Mammary epithelial cell (primary cell): ENCODE measurements at regions of chr2 and their contacts with region 1.

Region 1: GRCh38 chr2:88831792-88832248 is 140.3 kb downstream of the RPIA start:
- DNase-seq: no peak
- H3K4me3 ChIP-seq: no peak overlapping the region
- H3K27ac ChIP-seq: no peak overlapping the region
- H3K4me1 ChIP-seq: peaks cover 2% of the 10 kb centered on the region
- H3K27me3 ChIP-seq: no peaks in the 10 kb centered on the region
- CTCF ChIP-seq: peak; percentile 46 to 51

Region 2: DNA sequence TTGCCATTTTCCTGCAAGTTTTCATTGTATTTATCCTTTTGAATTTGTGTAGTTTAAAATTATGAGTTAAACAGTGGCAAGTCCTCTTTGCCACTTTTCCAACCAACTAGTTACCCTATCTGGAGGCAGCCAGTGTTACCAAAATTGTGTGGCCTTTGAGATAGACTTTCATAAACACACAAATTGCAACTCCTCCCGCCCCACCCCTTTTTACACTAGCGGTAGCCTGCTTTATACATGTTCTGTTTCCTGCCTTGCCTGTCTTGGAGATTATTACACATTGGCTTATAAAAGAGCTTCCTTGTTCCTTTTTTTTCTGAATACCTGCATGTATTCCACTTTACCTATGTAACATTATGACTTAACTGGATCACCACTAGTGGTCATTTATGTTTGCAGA is 83.8 kb before region 1 on chr2:
- CTCF ChIA-PET with region 1: no interaction called
- dilution Hi-C with region 1: loop called (anchors 5 kb)
- in situ Hi-C with region 1: no loop called
- intact Hi-C with region 1: no loop called
- DNase-seq: no peak
- H3K4me3 ChIP-seq: no peak overlapping the region
- H3K27ac ChIP-seq: no peak overlapping the region
- H3K4me1 ChIP-seq: no peaks in the 10 kb centered on the region
- H3K27me3 ChIP-seq: no peaks in the 10 kb centered on the region
- CTCF ChIP-seq: no peak

Region 3: GRCh38 chr2:88857951-88858411 is 26.2 kb after region 1 on chr2:
- CTCF ChIA-PET with region 1: no interaction called
- dilution Hi-C with region 1: no loop called
- in situ Hi-C with region 1: no loop called
- intact Hi-C with region 1: no loop called
- DNase-seq: peak; percentile 2
- H3K4me3 ChIP-seq: no peak overlapping the region
- H3K27ac ChIP-seq: no peak overlapping the region
- H3K4me1 ChIP-seq: no peaks in the 10 kb centered on the region
- H3K27me3 ChIP-seq: peaks cover 1% of the 10 kb centered on the region
- CTCF ChIP-seq: no peak

Region 4: DNA sequence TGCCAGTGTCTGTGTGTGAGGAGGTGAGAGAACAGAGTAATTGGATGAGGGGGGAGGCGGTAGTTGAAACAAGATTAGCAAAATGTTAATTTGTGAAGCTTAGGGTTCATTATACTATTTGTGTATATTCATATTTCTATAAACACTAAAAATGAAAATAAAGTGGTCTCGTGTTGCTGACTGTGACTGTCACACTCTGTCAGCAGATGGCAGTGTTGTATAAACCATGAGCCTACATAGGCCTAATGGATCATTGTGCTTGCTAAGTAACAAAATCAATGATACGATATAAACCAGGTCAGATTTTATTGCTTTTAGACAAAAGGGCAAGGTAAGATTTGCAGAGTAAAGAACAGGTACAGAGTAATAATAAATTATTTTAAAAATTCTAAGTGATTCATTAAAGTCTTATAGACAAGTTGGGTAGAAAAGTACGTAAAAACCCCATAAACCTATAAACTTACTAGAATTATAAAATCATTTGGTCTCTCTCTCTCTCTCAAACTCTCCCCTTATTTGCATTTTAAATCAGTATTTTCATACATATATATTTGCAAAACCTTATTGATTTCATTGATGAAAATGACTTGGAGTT is 42.3 kb after region 1 on chr2:
- CTCF ChIA-PET with region 1: no interaction called
- dilution Hi-C with region 1: loop called (anchors 5 kb)
- in situ Hi-C with region 1: no loop called
- intact Hi-C with region 1: no loop called
- DNase-seq: peak; percentile 32
- H3K4me3 ChIP-seq: no peak overlapping the region
- H3K27ac ChIP-seq: no peak overlapping the region
- H3K4me1 ChIP-seq: no peaks in the 10 kb centered on the region
- H3K27me3 ChIP-seq: no peaks in the 10 kb centered on the region
- CTCF ChIP-seq: peak; percentile 79 to 85

Region 5: DNA sequence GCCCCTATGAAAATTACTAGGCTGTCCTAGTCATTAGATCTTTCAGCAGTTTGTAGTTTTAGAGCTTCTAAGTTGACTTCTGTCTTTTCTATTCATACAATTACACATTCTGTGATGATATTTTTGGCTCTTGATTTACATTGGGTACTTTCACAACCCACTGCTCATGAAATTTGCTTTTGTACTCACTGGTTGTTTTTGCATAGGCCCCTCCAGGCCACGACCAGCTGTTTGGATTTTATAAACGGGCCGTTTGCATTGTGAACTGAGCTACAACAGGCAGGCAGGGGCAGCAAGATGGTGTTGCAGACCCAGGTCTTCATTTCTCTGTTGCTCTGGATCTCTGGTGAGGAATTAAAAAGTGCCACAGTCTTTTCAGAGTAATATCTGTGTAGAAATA is 53.5 kb after region 1 on chr2:
- CTCF ChIA-PET with region 1: no interaction called
- dilution Hi-C with region 1: no loop called
- in situ Hi-C with region 1: no loop called
- intact Hi-C with region 1: no loop called
- DNase-seq: no peak
- H3K4me3 ChIP-seq: no peak overlapping the region
- H3K27ac ChIP-seq: no peak overlapping the region
- H3K4me1 ChIP-seq: no peaks in the 10 kb centered on the region
- H3K27me3 ChIP-seq: no peaks in the 10 kb centered on the region
- CTCF ChIP-seq: no peak